Right cardiac atrium (tissue), 5 donors: ENCODE measurements at regions of chr16 and their contacts with region 1.

Region 1: GRCh38 chr16:28549390-28549789 is 4.3 kb upstream of the SGF29 start:
- DNase-seq: no peak
- ATAC-seq: no peak
- H3K4me3 ChIP-seq: no peak overlapping the region
- H3K27ac ChIP-seq: no peak overlapping the region
- H3K4me1 ChIP-seq: peaks cover under 1% of the 10 kb centered on the region
- H3K27me3 ChIP-seq: no peaks in the 10 kb centered on the region

Region 2: GRCh38 chr16:28481986-28482385 is 67.4 kb before region 1 on chr16:
- intact Hi-C with region 1: loop called in 1 of 4 experiments (anchors 10 kb)
- DNase-seq: peak in 1 of 3 donors; percentile 44
- ATAC-seq: no peak
- H3K4me3 ChIP-seq: no peak overlapping the region
- H3K27ac ChIP-seq: no peak overlapping the region
- H3K4me1 ChIP-seq: no peaks in the 10 kb centered on the region
- H3K27me3 ChIP-seq: no peaks in the 10 kb centered on the region

Region 3: GRCh38 chr16:28491970-28492474 is 57.4 kb before region 1 on chr16 and contains the start of gene CLN3:
- intact Hi-C with region 1: loop called in 2 of 4 experiments (anchors 5 to 10 kb)
- DNase-seq: peak; percentile 92 to 95 (median 95)
- ATAC-seq: peak; percentile 97
- H3K4me3 ChIP-seq: peak within 1 kb of the TSS; percentile 96
- H3K27ac ChIP-seq: peak within 1 kb of the TSS; percentile 99
- H3K4me1 ChIP-seq: no peaks in the 10 kb centered on the region
- H3K27me3 ChIP-seq: no peaks in the 10 kb centered on the region
- total RNA-seq, gene CLN3: 10.0 to 17.9 (median 13.9) TPM